Breast epithelium (tissue), 4 donors: ENCODE measurements at regions of chr17 and their contacts with region 1.

Region 1: DNA sequence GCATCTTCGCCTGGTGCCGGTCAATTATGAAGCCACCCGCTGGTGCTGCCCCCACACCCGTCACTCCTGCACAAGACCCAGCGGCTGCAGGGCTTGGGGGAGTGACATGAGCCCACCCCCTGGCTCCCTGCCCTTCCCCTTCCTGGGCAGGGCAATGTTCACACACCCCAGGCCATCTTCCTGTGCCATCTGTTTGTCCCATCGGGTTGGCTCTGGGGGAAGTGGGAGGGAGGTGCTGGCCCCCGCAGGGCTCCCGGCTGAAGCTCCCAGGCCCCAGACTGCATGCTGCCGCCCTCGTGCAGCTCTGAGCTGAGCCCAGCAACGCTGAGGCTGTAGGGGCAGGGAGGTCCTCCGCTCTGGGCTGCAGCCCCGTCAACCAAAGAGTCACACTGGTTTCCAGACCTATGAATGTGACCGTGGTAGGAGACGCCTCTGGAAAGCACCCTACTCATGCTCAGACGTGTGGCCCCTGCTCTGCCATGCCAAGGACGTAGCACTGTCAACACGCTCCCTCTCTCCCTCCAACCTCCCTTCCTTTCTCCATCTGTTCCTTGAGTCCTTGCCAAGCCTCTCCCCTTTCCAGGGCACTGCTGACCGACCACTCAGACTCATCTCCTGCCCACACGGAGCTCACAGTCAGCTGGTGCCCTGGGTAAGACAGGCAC is 140.4 kb downstream of the ENGASE start:
- DNase-seq: no peak
- H3K4me3 ChIP-seq: no peak overlapping the region
- H3K27ac ChIP-seq: no peak overlapping the region
- H3K4me1 ChIP-seq: no peaks in the 10 kb centered on the region
- H3K27me3 ChIP-seq: peaks cover 0 to 99% of the 10 kb centered on the region in 2 donors
- CTCF ChIP-seq: no peak
- POLR2A ChIP-seq: no peak

Region 2: DNA sequence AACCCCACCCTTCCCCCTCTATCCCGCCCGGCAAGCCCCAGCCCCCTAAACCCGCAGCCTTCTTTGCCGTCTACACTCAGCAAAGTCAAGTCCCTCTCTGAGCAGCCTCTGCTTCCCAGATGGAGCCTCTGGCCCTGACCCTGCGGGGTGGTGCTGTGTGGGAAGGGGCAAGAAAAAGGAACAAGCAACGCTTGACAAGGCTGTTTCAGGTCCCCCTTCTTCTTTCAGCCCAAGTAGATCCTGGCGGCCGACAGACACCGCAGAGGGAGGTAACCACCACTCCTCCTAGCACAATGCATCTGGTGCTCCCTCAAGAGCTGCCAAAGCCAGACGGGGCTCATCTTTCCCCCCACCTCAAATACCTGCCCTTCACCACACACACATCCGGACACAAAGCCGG is 37.8 kb after region 1 on chr17:
- intact Hi-C with region 1: no loop called
- DNase-seq: no peak
- H3K4me3 ChIP-seq: no peak overlapping the region
- H3K27ac ChIP-seq: no peak overlapping the region
- H3K4me1 ChIP-seq: no peaks in the 10 kb centered on the region
- H3K27me3 ChIP-seq: peaks cover 0 to 94% of the 10 kb centered on the region in 2 donors
- CTCF ChIP-seq: no peak
- POLR2A ChIP-seq: no peak

Region 3: DNA sequence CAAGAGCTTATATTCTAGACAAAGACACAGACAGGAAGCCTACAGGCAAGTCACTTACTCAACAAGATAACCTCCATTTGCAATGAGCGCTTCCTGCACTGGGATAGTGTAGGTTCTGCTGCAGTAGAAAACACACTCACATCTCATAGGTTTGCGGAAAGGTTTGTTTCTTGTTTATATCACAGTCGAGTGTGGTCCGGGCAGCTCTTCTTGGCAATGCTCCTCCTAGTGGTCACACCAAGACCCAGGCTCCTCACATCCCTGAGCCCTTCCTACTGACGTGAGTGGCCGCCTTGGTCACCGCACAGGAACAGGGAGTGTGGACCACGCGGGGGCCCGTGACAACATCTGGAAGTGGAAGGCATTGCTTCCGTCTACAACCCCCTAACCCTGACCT is 443.7 kb after region 1 on chr17:
- intact Hi-C with region 1: no loop called
- DNase-seq: peak in 1 of 2 donors; percentile 49
- H3K4me3 ChIP-seq: no peak overlapping the region
- H3K27ac ChIP-seq: no peak overlapping the region
- H3K4me1 ChIP-seq: no peaks in the 10 kb centered on the region
- H3K27me3 ChIP-seq: peaks cover 0 to 6% of the 10 kb centered on the region in 2 donors
- CTCF ChIP-seq: peak in 1 of 3 donors; percentile 11
- POLR2A ChIP-seq: no peak

Region 4: DNA sequence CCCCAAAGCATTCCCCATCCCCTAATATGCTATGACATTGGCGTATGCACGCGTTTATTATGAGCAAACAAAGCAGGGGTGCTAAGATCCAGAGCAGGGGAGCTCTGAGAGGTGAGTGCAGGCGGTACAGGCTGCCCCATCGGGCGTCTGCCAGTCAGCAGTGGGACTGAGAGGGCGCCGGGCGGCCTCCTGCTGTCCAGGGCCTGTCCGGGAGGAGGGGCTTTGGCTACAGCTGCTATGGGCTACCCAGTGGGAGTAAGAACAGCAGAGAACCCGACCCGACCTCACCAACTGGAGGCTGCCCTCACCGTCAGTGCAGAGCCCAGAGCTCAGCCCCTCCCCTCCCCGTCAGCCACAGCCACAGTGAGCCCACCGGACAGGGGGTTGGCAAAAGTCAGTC is 1969.5 kb after region 1 on chr17:
- intact Hi-C with region 1: loop called (anchors 5 kb)
- DNase-seq: no peak
- H3K4me3 ChIP-seq: no peak overlapping the region
- H3K27ac ChIP-seq: no peak overlapping the region
- H3K4me1 ChIP-seq: no peaks in the 10 kb centered on the region
- H3K27me3 ChIP-seq: peaks cover 0 to 9% of the 10 kb centered on the region in 2 donors
- CTCF ChIP-seq: no peak
- POLR2A ChIP-seq: no peak